ENCODE measurements at regions of chr4 and their contacts with region 1.

Region 1: DNA sequence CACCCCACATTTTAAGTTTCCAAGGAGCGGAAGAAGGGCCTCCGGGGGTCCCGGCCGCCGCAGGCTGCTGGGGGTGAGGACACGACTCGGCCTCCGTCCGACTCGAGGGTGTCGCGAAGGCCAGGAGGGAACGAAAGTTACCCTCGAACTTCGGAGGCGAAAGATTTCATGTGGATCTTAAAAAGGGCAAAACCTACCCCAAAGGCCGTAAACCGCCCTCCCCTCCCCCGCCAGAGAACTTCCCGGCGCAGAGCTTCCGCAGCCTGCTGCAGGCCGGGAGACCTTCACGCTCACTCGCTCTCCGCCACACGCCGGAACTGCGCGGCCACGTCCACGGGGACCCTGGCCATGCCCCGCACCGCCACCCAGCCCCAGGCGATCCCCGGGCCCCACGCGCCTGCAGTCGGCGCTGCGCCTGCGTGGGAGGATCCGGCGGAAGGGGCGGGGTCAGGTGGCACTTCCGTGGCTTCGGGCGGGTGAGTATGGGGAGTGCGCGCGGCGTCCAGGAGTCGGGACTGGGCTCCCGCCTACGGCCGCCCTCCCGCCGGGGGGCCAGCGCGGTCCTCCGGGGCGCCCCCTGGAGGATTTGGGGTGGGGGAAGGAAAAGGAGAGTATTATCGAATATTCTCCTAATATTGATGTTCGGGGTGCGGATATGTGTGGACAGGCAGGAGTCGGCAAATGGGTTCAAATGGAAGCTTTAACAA is at the start of gene MMAA:
- DNase-seq: peak; percentile 93 to 97
- H3K4me3 ChIP-seq: peak within 1 kb of the TSS; percentile 71 to 76
- H3K27ac ChIP-seq: peak within 1 kb of the TSS; percentile 93 to 94
- H3K4me1 ChIP-seq: peaks cover 0 to 34% (median 6%) of the 10 kb centered on the region in 4 donors
- H3K27me3 ChIP-seq: no peaks in the 10 kb centered on the region
- CTCF ChIP-seq: peak; percentile 50 to 53

Region 2: DNA sequence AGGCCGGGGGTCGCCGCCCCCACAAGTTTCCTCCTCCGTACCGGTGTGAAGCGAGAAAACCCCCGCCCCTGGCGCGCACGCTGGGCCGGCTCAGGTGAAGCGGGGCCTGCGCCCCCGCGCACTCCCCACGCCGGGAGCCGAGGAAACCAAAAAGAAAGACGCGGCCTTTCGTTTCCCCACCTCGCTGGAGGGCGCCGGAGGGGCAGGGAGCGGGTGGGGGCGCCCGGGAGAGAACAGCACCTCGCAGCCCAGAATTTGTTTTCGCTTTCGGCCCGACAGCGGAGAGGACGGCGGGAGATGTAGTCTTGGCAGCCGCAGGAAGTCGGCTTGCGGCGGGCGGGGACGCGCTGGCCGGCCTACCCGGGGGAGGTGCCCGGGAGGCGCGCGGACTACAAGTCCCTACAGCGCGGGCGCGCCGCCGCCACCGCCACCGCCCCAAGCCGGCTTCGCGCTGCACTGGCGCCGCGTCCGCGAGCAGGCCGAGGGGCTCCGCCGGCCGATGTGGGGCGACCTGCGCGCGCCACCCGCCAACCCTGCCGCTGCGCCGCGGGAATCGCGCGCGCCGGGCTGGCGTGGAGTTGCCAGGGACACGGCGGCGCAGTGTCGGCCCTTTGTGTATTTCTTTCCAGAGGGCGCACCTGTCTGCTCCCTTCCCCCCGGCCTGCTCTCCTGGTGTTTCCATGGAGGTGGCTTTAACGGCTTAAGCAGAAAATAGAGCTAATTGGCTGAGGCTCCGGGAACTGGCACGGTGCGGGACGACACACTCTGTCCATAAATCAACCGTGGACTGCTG is 438.6 kb before region 1 on chr4 and contains the start of gene OTUD4:
- intact Hi-C with region 1: loop called (anchors 5 kb)
- DNase-seq: peak; percentile 95 to 97
- H3K4me3 ChIP-seq: peak within 1 kb of the TSS; percentile 84 to 98
- H3K27ac ChIP-seq: peak within 1 kb of the TSS; percentile 97 to 98
- H3K4me1 ChIP-seq: peaks cover 0 to 40% (median 21%) of the 10 kb centered on the region in 4 donors
- H3K27me3 ChIP-seq: no peaks in the 10 kb centered on the region
- CTCF ChIP-seq: no peak

Region 3: DNA sequence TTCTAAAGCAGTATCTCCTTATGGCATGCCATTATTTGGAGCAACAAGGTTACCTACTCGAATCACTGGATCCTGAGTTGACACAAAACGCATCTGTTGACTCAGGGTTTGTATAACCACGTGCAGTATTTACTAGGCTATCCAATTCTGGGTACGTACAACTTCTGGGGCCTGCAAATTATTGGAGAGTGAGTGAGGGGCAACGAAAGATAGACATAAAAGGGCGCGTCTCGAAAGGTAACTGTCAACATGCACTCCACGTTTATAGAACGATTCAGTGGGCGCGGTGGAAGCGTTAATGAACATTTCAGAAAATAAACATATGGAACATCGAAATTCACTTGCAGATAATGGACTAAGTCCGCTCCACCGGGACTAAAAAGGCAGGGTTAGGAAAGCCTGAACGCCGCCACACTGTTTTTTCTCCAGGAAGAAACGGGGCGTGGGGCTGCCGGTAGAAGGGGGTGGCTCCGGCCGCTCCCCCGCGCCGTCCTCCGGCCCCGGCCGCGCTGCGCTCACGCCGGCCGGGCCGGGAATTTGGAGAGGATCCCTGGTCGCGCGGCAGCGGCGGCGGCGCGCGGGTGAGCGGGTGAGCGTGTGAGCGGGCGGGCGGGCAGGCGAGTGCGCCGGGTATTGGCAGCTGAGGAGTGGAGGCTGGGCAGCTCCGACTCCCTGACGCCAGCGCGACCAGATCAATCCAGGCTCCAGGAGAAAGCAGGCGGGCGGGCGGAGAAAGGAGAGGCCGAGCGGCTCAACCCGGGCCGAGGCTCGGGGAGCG is 137.7 kb before region 1 on chr4 and contains the start of gene SMAD1:
- intact Hi-C with region 1: loop called (anchors 10 kb)
- DNase-seq: peak; percentile 86 to 92
- H3K4me3 ChIP-seq: peak within 1 kb of the TSS; percentile 71 to 84
- H3K27ac ChIP-seq: peak within 1 kb of the TSS; percentile 93 to 99
- H3K4me1 ChIP-seq: peaks cover 0 to 22% (median 8%) of the 10 kb centered on the region in 4 donors
- H3K27me3 ChIP-seq: no peaks in the 10 kb centered on the region
- CTCF ChIP-seq: no peak

Region 4: GRCh38 chr4:145734576-145735346 is 115.7 kb after region 1 on chr4:
- intact Hi-C with region 1: loop called (anchors 2 kb)
- DNase-seq: peak; percentile 85 to 95
- H3K4me3 ChIP-seq: peak overlapping the region; percentile 34 to 71
- H3K27ac ChIP-seq: peak overlapping the region; percentile 93 to 99
- H3K4me1 ChIP-seq: peaks cover 0 to 52% (median 41%) of the 10 kb centered on the region in 4 donors
- H3K27me3 ChIP-seq: no peaks in the 10 kb centered on the region
- CTCF ChIP-seq: no peak

Region 5: DNA sequence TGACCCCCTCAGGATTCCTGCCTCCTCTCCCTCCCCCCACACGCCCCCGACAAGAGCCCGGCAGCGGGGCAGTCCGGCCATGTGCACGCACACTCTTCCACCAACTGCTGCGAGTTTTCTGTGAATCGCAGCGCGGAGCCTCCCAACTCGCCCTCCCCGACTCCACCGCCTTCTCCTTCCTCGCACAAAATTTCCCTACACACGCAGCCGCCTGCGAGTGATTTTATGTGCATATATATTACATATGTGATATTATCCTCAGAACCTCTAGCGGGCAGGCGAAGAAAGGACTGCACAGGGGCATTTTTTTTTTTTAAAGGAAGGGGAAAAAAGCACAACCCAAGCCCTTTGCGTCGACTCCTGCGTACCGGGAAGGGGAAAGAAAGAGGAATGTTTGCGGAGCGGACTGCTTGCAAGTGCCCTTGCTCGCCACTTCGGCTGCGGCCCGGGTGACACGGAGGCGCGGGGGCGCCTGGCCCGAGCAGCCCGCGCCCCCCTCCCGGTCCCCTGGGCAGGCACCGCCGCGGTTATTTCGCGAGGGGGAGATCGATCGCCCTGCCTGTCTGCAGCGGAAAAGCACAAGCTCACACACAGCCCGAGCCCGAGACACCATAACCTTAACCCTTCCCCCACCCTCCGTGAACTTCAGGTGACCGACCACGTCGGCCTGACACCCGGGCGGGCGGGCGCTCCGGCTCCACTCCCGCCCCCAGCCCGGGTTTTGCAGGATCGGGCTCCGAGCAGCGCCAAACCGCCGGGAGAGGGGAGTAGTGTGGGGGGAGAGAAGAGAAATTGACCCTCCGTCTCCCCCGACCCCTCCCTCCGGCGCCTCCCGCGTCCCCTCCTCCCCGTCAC is 317.3 kb after region 1 on chr4:
- intact Hi-C with region 1: loop called (anchors 5 kb)
- DNase-seq: peak; percentile 51 to 85
- H3K4me3 ChIP-seq: peak overlapping the region; percentile 82 to 95
- H3K27ac ChIP-seq: peak overlapping the region; percentile 92 to 99
- H3K4me1 ChIP-seq: peaks cover 0 to 44% (median 22%) of the 10 kb centered on the region in 4 donors
- H3K27me3 ChIP-seq: no peaks in the 10 kb centered on the region
- CTCF ChIP-seq: peak; percentile 13 to 18

Region 6: DNA sequence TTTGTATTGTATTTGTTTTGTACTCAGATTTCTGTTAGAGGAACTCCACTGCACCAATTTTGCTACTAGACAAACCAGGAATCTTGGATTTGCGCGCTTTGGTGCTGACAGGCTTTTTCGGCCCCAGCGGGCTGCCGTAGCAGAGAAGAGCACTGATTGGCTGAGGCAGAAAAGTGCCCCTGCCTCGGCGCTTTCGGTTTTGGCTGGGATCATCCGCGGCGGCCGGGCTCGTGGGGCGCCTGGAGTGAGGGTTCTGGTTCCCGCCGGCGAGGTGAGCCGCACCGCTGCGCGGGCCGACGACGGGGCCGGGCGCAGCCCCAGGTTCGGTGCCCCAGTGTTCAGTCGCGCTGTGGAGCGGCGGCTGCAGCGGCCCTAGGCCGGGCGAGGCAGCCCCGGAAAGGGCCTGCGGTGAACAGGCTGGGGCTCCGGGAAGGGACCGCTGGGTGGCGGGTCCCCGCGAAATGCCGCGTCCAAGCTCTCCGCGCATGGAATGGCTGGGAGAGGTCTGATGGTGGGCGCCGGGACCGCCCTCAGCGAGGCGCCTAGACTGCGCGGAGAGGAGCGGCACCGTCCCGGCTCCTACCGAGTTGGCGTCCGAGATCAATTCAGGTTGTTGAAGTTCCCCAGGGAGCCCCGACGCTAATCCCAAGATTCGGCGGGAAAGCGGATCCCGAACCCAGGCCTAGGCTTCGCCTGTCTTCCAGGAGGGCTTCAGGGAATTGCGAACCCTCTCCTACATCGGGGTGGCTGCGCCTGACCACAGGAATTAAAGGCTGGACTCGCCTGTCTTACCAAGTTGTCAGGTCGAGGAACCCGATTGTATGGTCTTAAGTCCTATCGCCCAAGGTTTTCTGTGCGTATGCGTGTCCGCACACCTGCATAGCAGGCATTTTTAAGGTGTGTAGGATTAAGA is 556.7 kb after region 1 on chr4 and contains the start of gene LSM6:
- intact Hi-C with region 1: loop called (anchors 10 kb)
- DNase-seq: peak; percentile 81 to 91
- H3K4me3 ChIP-seq: peak within 1 kb of the TSS; percentile 91 to 95
- H3K27ac ChIP-seq: peak within 1 kb of the TSS; percentile 89 to 97
- H3K4me1 ChIP-seq: peaks cover 0 to 35% (median 22%) of the 10 kb centered on the region in 4 donors
- H3K27me3 ChIP-seq: no peaks in the 10 kb centered on the region
- CTCF ChIP-seq: peak; percentile 16 to 24

Measured in tibial artery (tissue), 4 donors.